Panc1 (cell line): ENCODE measurements at regions of chr10 and their contacts with region 1.

Region 1: GRCh38 chr10:110286841-110287240 is 17.9 kb downstream of the SMNDC1 start:
- DNase-seq: no peak
- ATAC-seq: peak; percentile 52; the same call in 1 of the 2 replicates
- H3K4me3 ChIP-seq: no peak overlapping the region
- H3K27ac ChIP-seq: no peak overlapping the region
- H3K4me1 ChIP-seq: no peaks in the 10 kb centered on the region
- H3K27me3 ChIP-seq: no peaks in the 10 kb centered on the region
- CTCF ChIP-seq: no peak

Region 2: GRCh38 chr10:110225756-110226542 is 60.9 kb before region 1 on chr10:
- CTCF ChIA-PET with region 1: interaction called, 18 read pairs
- POLR2A ChIA-PET with region 1: no interaction called
- in situ Hi-C with region 1: no loop called
- intact Hi-C with region 1: no loop called
- DNase-seq: no peak
- ATAC-seq: peak; percentile 95
- H3K4me3 ChIP-seq: peak overlapping the region; percentile 71 to 79
- H3K27ac ChIP-seq: peak overlapping the region; percentile 30
- H3K4me1 ChIP-seq: peaks cover 3% of the 10 kb centered on the region; the same call in 1 of the 2 replicates
- H3K27me3 ChIP-seq: no peaks in the 10 kb centered on the region; the same call in 1 of the 2 replicates
- CTCF ChIP-seq: peak; percentile 93